Esophagus muscularis mucosa (tissue), 4 donors: ENCODE measurements at regions of chr19 and their contacts with region 1.

Region 1: DNA sequence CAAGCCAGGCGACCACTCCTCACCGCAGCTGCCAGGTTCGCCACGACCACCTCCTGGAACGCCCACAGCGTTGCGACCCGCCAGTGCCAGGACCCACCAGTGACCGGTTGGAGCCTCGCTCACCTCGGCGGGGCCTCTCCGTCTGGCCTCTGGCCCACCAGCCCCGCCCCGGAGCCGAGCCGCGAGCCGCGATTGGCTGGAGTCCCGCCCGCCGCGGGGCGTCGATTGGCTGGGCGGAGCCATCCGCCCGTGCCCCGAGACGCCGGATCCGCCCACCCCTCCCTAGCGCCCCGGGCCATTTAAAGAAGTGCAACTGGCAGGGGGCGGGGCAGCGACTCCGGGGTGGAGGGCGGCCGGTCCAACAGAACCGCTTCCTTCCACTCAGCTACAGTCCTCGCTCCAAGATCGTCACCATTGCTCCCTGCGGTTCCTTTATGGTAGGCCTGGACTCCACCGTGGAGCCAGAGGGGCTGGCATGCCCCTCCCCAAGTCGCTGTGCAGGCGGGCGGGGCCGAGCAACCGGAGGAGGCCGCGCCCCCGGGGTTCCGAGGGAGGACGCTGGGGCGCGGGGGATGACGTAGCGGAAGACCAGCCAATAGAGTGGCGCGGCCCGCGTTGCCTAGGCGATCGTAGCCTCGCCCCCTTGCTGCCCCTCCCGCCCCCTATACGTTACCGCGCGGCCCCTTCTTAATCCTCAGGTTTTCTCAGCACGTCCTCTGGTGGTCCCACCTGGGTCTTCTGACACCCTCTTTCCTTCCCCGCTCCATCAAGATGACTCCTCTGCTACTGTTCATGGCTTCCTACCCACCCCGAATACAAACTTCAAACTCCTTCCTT is at the start of gene SERTAD3:
- DNase-seq: peak; percentile 99
- H3K4me3 ChIP-seq: peak within 1 kb of the TSS; percentile 65 to 100 (median 82)
- H3K27ac ChIP-seq: peak within 1 kb of the TSS; percentile 90 to 99 (median 98)
- H3K4me1 ChIP-seq: peaks cover 26 to 42% (median 39%) of the 10 kb centered on the region in 4 donors
- H3K27me3 ChIP-seq: no peaks in the 10 kb centered on the region
- CTCF ChIP-seq: peak in 2 of 3 experiments; percentile 50 to 53
- EP300 ChIP-seq: no peak
- POLR2A ChIP-seq: peak; percentile 98
- total RNA-seq, gene SERTAD3: 18.3 to 47.2 (median 37.8) TPM

Region 2: GRCh38 chr19:40420766-40421764 is 23.3 kb before region 1 on chr19:
- intact Hi-C with region 1: loop called (anchors 1 kb)
- DNase-seq: peak; percentile 97
- H3K4me3 ChIP-seq: peak overlapping the region; percentile 63 to 77 (median 67)
- H3K27ac ChIP-seq: peak overlapping the region; percentile 98 to 100 (median 100)
- H3K4me1 ChIP-seq: peaks cover 41 to 67% (median 54%) of the 10 kb centered on the region in 4 donors
- H3K27me3 ChIP-seq: no peaks in the 10 kb centered on the region
- CTCF ChIP-seq: peak; percentile 88 to 95 (median 91)
- EP300 ChIP-seq: no peak
- POLR2A ChIP-seq: peak; percentile 88

Region 3: GRCh38 chr19:40433391-40434216 is 10.8 kb before region 1 on chr19:
- intact Hi-C with region 1: no loop called
- DNase-seq: no peak
- H3K4me3 ChIP-seq: peak overlapping the region; percentile 48 to 61 (median 57)
- H3K27ac ChIP-seq: peak overlapping the region; percentile 87 to 91 (median 90)
- H3K4me1 ChIP-seq: peaks cover 22 to 33% (median 30%) of the 10 kb centered on the region in 4 donors
- H3K27me3 ChIP-seq: no peaks in the 10 kb centered on the region
- CTCF ChIP-seq: no peak
- EP300 ChIP-seq: no peak
- POLR2A ChIP-seq: no peak

Region 4: GRCh38 chr19:40465557-40466150 is 21.2 kb after region 1 on chr19 and contains the start of gene BLVRB:
- intact Hi-C with region 1: no loop called
- DNase-seq: peak; percentile 100
- H3K4me3 ChIP-seq: peak within 1 kb of the TSS; percentile 69 to 89 (median 80)
- H3K27ac ChIP-seq: peak within 1 kb of the TSS; percentile 89 to 94 (median 92)
- H3K4me1 ChIP-seq: peaks cover 27 to 53% (median 50%) of the 10 kb centered on the region in 4 donors
- H3K27me3 ChIP-seq: no peaks in the 10 kb centered on the region
- CTCF ChIP-seq: peak in 1 of 3 experiments; percentile 20
- EP300 ChIP-seq: no peak
- POLR2A ChIP-seq: peak; percentile 80
- total RNA-seq, gene BLVRB: 159 to 223 (median 194) TPM